ENCODE measurements at regions of chr1 and their contacts with region 1.

Region 1: GRCh38 chr1:76919085-76919484 is 51.8 kb downstream of the ST6GALNAC5 start:
- DNase-seq: no peak
- ATAC-seq: peak; percentile 10; the same call in 1 of the 3 replicates
- H3K4me3 ChIP-seq: no peak overlapping the region
- H3K27ac ChIP-seq: no peak overlapping the region
- H3K4me1 ChIP-seq: no peaks in the 10 kb centered on the region
- H3K27me3 ChIP-seq: no peaks in the 10 kb centered on the region
- CTCF ChIP-seq: no peak
- EP300 ChIP-seq: no peak
- POLR2A ChIP-seq: no peak
- RAD21 ChIP-seq: no peak

Region 2: GRCh38 chr1:76933872-76934815 is 15.1 kb after region 1 on chr1:
- CTCF ChIA-PET with region 1: interaction called, 6 read pairs
- POLR2A ChIA-PET with region 1: interaction called, 9 read pairs
- RAD21 ChIA-PET with region 1: interaction called, 46 read pairs
- SMC1A ChIA-PET with region 1: interaction called, 75 read pairs
- in situ Hi-C with region 1: no loop called
- intact Hi-C with region 1: no loop called
- DNase-seq: no peak
- ATAC-seq: peak; percentile 53
- H3K4me3 ChIP-seq: no peak overlapping the region
- H3K27ac ChIP-seq: no peak overlapping the region
- H3K4me1 ChIP-seq: peaks cover 1% of the 10 kb centered on the region; the same call in 1 of the 2 replicates
- H3K27me3 ChIP-seq: no peaks in the 10 kb centered on the region; a peak in 1 of 4 replicates
- CTCF ChIP-seq: no peak
- EP300 ChIP-seq: no peak
- POLR2A ChIP-seq: no peak
- RAD21 ChIP-seq: no peak

Measured in GM12878 (cell line).